Mammary epithelial cell (primary cell): ENCODE measurements at regions of chr6 and their contacts with region 1.

Region 1: DNA sequence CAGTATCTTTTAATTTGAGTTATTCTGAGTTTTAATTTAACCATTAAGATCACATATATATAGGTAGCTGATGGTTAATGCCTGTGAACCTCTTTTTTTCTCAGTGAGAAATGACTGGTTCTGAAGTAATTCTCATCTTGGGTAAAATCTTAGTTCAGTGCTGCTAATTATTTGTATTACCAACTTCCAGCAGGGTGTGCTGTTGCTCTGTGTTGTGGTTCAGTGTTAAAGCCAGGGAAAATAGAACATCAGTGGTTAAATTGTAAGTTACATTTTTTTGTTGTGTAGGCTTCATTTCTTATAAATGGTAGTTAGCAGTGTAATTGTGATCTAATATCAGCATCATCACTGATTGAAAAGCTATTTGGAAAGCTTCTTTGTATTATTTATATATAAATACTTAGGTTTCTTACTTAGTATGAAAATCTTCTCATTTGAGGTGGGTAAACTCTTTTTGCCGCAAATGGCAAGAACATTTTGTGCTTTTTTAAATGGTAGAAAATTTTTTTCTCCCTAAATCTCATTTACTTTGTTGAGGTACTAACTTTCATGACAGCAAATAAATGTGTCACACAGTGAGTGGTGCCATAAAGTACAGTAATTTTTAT is 43.7 kb downstream of the CDC5L start:
- DNase-seq: peak; percentile 43
- H3K4me3 ChIP-seq: no peak overlapping the region
- H3K27ac ChIP-seq: no peak overlapping the region
- H3K4me1 ChIP-seq: no peaks in the 10 kb centered on the region
- H3K27me3 ChIP-seq: no peaks in the 10 kb centered on the region
- CTCF ChIP-seq: peak; percentile 68 to 76

Region 2: DNA sequence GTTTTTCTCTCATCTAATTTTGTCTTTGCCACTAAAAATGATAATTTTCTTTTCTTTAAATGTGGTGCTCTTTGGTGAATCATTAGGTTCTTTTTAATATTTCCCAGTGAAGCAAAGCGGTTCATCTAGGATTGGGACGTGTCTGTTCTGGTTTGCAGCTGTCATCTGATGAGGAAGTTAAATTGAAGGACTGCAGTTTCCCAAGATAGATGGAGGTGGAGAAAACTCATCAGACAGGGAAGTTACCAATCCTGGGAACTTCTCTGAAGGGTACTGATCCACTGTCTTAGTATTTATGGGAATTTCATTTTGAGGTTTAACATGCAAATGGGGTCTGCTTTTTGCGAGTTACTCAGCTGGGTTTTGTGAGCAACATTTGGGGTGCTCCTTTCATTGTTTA is 115.7 kb before region 1 on chr6:
- CTCF ChIA-PET with region 1: no interaction called
- dilution Hi-C with region 1: no loop called
- in situ Hi-C with region 1: no loop called
- intact Hi-C with region 1: no loop called
- DNase-seq: no peak
- H3K4me3 ChIP-seq: no peak overlapping the region
- H3K27ac ChIP-seq: no peak overlapping the region
- H3K4me1 ChIP-seq: peaks cover 7% of the 10 kb centered on the region
- H3K27me3 ChIP-seq: no peaks in the 10 kb centered on the region
- CTCF ChIP-seq: no peak

Region 3: DNA sequence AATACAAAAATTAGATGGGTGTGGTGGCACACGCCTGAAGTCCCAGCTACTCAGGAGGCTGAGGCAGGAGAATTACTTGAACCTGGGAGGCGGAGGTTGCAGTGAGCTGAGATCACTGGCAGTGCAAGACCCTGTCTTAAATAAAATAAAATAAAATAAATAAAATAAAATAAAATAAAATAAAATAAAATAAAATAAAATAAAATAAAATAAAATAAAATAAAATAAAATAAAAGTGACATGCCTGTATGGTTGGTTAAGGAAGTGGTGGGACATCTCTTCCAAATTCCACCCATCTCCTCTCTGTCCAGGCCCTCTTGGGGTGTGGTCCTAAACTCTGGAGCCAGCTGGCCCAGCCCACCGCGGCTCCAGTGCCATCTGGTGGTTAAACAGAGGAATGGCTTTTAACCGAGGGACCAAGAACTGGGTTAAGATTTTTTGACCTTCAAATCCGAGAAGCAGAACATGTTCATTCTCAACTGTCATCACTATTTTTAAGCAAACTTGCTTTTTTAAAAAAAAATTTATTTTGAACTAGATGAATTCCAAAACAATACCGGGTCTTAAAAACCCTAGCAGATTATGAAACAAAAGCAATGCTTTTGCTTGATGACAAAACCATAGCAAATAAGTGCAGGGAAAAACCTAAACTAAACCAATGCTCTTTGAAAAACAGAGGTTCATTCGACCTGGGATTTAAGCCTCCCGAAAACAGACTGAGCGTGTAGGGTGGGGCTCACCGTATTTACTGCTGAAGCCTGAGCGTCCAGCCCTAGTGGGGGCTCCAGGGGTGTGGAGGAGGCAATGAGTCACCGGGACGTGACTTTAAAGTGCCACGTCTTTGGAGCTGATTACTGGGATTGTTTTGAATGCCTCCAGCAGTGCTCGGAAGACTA is 25.1 kb after region 1 on chr6:
- CTCF ChIA-PET with region 1: no interaction called
- dilution Hi-C with region 1: no loop called
- in situ Hi-C with region 1: no loop called
- intact Hi-C with region 1: loop called (anchors 1 kb)
- DNase-seq: peak; percentile 41
- H3K4me3 ChIP-seq: no peak overlapping the region
- H3K27ac ChIP-seq: no peak overlapping the region
- H3K4me1 ChIP-seq: peaks cover 27% of the 10 kb centered on the region
- H3K27me3 ChIP-seq: no peaks in the 10 kb centered on the region
- CTCF ChIP-seq: peak; percentile 77 to 91

Region 4: GRCh38 chr6:44464527-44465310 is 33.5 kb after region 1 on chr6:
- CTCF ChIA-PET with region 1: interaction called, 17 read pairs
- dilution Hi-C with region 1: no loop called
- in situ Hi-C with region 1: no loop called
- intact Hi-C with region 1: loop called (anchors 1 kb)
- DNase-seq: no peak
- H3K4me3 ChIP-seq: no peak overlapping the region
- H3K27ac ChIP-seq: no peak overlapping the region
- H3K4me1 ChIP-seq: no peaks in the 10 kb centered on the region
- H3K27me3 ChIP-seq: no peaks in the 10 kb centered on the region
- CTCF ChIP-seq: no peak

Region 5: DNA sequence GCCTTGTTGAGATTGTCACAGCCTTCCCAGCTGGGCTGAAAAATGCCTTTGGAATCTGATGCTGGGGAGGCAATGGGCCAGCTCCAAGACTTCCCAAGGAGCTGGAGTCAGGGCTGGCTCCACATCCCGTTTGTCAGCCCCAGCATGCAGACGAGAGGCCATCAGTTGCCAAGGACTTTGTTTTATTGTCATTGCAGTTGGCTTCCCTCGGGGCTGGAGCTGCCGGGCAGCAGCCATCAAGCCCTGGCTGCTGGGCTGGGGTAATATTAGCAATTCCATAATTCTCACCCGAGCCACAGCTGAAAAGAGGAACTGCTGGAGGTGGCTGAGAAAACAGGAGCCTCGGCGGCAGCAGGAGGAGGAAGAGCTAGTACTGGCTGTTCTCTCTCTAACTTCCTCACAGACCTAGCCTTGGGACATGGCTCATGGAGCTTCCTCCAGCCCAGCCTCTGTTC is 138.7 kb after region 1 on chr6:
- CTCF ChIA-PET with region 1: no interaction called
- dilution Hi-C with region 1: no loop called
- in situ Hi-C with region 1: no loop called
- intact Hi-C with region 1: no loop called
- DNase-seq: no peak
- H3K4me3 ChIP-seq: no peak overlapping the region
- H3K27ac ChIP-seq: no peak overlapping the region
- H3K4me1 ChIP-seq: no peaks in the 10 kb centered on the region
- H3K27me3 ChIP-seq: no peaks in the 10 kb centered on the region
- CTCF ChIP-seq: no peak